ENCODE measurements at regions of chr16 and their contacts with region 1.

Region 1: DNA sequence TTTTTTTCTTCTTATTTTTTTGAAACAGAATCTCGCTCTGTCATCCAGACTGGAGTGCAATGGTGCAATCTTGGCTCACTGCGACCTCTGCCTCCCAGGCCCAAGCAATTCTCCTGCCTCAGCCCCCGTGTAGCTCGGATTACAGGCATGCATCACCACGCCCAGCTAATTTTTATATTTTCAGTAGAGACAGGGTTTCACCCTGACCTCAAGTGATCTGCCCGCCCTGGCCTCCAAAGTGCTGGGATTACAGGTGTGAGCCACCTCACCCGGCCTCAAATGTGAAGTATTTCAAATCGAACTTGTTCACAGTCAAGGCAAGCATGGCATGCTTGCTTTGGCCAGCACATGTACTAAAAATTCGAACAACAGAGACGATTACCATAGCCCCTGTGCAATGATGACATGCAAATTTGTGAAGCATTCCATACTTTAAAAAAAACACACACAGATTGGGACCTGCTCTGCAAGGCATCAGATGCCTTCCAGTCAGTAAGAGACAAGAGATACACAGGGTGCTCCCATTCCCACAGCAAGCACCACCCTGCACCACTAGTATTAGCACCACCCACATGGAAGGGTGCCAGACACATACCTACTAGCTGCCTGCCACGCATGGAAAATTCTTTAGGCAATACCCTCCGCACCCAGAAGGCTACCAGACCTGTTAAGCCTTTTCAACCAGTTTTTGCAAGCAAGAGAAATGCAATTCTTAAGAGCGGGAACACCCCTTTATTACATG is 47.2 kb downstream of the ANKRD11 start:
- DNase-seq: peak; percentile 95
- H3K4me3 Mint-ChIP-seq: peak overlapping the region; percentile 68
- H3K27ac Mint-ChIP-seq: peak overlapping the region; percentile 95
- H3K4me1 Mint-ChIP-seq: peaks cover 49% of the 10 kb centered on the region
- H3K27me3 Mint-ChIP-seq: no peaks in the 10 kb centered on the region
- CTCF ChIP-seq: peak; percentile 12

Region 2: GRCh38 chr16:89363621-89364393 is 79.4 kb before region 1 on chr16:
- CTCF ChIA-PET with region 1: interaction called, 3 read pairs
- POLR2A ChIA-PET with region 1: interaction called, 10 read pairs
- intact Hi-C with region 1: no loop called
- DNase-seq: peak; percentile 75
- H3K4me3 Mint-ChIP-seq: peak overlapping the region; percentile 64
- H3K27ac Mint-ChIP-seq: peak overlapping the region; percentile 85
- H3K4me1 Mint-ChIP-seq: peaks cover 38% of the 10 kb centered on the region
- H3K27me3 Mint-ChIP-seq: no peaks in the 10 kb centered on the region
- CTCF ChIP-seq: no peak

Region 3: DNA sequence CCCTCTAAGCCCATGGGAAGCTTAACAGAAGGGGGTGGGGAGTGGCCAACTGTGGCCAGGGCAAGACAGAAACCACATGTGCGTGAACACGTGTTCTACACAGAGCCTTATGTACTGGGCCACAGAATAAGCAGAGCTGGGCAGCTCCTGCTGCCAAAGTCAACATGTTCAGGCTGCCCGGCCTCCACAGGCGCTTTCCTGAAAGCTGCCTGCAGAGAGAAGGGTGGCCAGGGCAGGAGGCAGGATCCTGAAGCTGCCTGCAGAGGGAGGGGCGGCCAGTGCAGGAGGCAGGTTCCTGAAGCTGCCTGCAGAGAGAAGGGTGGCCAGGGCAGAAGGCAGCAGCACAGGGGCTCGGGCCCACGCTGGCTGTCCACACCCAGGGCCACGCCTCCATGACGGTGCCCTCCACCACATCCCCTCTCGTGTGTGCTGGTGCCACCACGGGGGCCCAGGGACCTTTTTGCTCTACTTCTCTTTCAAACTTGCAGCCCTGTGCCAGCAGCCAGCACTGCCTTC is 32.3 kb before region 1 on chr16:
- CTCF ChIA-PET with region 1: interaction called, 3 read pairs
- POLR2A ChIA-PET with region 1: interaction called, 17 read pairs
- intact Hi-C with region 1: no loop called
- DNase-seq: peak; percentile 81
- H3K4me3 Mint-ChIP-seq: no peak overlapping the region
- H3K27ac Mint-ChIP-seq: no peak overlapping the region
- H3K4me1 Mint-ChIP-seq: peaks cover 28% of the 10 kb centered on the region
- H3K27me3 Mint-ChIP-seq: no peaks in the 10 kb centered on the region
- CTCF ChIP-seq: no peak

Region 4: DNA sequence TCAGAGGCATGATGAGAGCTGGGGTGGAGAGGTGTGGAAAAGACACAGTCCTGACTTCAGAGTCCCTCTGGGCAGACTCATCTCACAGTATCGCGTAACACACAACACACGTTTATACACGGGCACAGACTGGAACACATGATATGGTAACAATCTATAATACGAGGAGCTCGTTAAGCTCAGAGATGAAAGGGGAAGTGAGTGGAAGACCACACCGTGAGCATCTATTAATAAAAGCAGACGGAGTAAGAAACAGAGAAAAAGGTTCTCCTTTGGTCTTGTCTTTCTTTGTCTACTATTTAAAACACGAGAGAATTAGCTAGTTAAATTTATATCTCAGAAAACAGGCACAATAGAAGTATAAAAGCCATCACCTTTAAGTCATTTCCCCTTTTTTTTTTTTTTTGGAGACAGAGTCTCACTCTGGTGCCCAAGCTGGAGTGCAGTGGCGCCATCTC is 33.7 kb after region 1 on chr16:
- CTCF ChIA-PET with region 1: interaction called, 6 read pairs
- POLR2A ChIA-PET with region 1: interaction called, 40 read pairs
- intact Hi-C with region 1: no loop called
- DNase-seq: no peak
- H3K4me3 Mint-ChIP-seq: peak overlapping the region; percentile 46
- H3K27ac Mint-ChIP-seq: peak overlapping the region; percentile 29
- H3K4me1 Mint-ChIP-seq: peaks cover 74% of the 10 kb centered on the region
- H3K27me3 Mint-ChIP-seq: no peaks in the 10 kb centered on the region
- CTCF ChIP-seq: no peak

Region 5: GRCh38 chr16:89490387-89491237 is 47.5 kb after region 1 on chr16 and contains the start of gene ANKRD11:
- CTCF ChIA-PET with region 1: interaction called, 3 read pairs
- POLR2A ChIA-PET with region 1: interaction called, 55 read pairs
- intact Hi-C with region 1: loop called (anchors 5 kb)
- DNase-seq: peak; percentile 99
- H3K4me3 Mint-ChIP-seq: peak within 1 kb of the TSS; percentile 88
- H3K27ac Mint-ChIP-seq: peak within 1 kb of the TSS; percentile 86
- H3K4me1 Mint-ChIP-seq: peaks cover 10% of the 10 kb centered on the region
- H3K27me3 Mint-ChIP-seq: no peaks in the 10 kb centered on the region
- CTCF ChIP-seq: no peak
- total RNA-seq, gene ANKRD11: 218 and 237 TPM in 2 replicates

Measured in MCF 10A (cell line).